ENCODE measurements at regions of chr7 and their contacts with region 1.

Region 1: GRCh38 chr7:116236020-116236630 is 25.8 kb downstream of the TES start:
- DNase-seq: peak; percentile 16
- H3K4me3 Mint-ChIP-seq: no peak overlapping the region
- H3K27ac Mint-ChIP-seq: no peak overlapping the region
- H3K4me1 Mint-ChIP-seq: peaks cover 23% of the 10 kb centered on the region
- H3K27me3 Mint-ChIP-seq: no peaks in the 10 kb centered on the region

Region 2: DNA sequence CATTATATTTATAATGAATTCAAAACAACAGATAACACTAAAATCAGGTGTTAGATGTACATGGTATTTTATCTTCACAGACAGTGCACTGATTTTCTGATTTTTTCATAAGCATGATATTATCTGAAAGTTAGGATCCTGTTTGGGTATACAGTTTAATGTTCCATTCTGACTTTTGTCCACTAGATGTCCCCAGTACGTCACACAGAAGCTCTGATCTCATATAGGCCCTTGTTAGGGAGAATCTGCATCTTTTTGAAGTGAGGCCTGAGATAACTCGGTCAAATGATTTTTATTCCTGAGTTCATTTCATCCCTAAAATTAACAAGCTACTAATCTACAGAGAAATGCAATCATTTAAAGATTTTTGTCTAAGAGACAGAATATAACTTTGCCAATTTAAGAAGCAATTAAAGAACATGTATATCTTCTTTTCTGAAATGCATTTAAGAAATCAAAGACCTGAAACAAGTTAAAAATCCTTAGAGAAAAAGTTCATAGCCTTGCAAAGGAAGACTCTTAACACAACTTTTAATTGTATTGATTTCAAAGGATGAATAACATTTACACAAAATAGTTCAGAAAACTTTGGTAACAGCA is 97.8 kb before region 1 on chr7:
- intact Hi-C with region 1: loop called (anchors 1 kb)
- DNase-seq: peak; percentile 16
- H3K4me3 Mint-ChIP-seq: no peak overlapping the region
- H3K27ac Mint-ChIP-seq: no peak overlapping the region
- H3K4me1 Mint-ChIP-seq: peaks cover 20% of the 10 kb centered on the region
- H3K27me3 Mint-ChIP-seq: peaks cover 9% of the 10 kb centered on the region

Region 3: GRCh38 chr7:116173051-116174028 is 62.8 kb before region 1 on chr7:
- intact Hi-C with region 1: loop called (anchors 1 kb)
- DNase-seq: no peak
- H3K4me3 Mint-ChIP-seq: no peak overlapping the region
- H3K27ac Mint-ChIP-seq: no peak overlapping the region
- H3K4me1 Mint-ChIP-seq: no peaks in the 10 kb centered on the region
- H3K27me3 Mint-ChIP-seq: peaks cover 13% of the 10 kb centered on the region

Region 4: GRCh38 chr7:116180302-116180701 is 55.8 kb before region 1 on chr7:
- intact Hi-C with region 1: loop called (anchors 1 kb)
- DNase-seq: peak; percentile 13
- H3K4me3 Mint-ChIP-seq: no peak overlapping the region
- H3K27ac Mint-ChIP-seq: no peak overlapping the region
- H3K4me1 Mint-ChIP-seq: no peaks in the 10 kb centered on the region
- H3K27me3 Mint-ChIP-seq: peaks cover 2% of the 10 kb centered on the region

Region 5: GRCh38 chr7:116224492-116225098 is 11.5 kb before region 1 on chr7:
- intact Hi-C with region 1: loop called (anchors 1 kb)
- DNase-seq: no peak
- H3K4me3 Mint-ChIP-seq: peak overlapping the region; percentile 53
- H3K27ac Mint-ChIP-seq: no peak overlapping the region
- H3K4me1 Mint-ChIP-seq: peaks cover 53% of the 10 kb centered on the region
- H3K27me3 Mint-ChIP-seq: no peaks in the 10 kb centered on the region

Region 6: GRCh38 chr7:116802746-116803152 is 566.6 kb after region 1 on chr7:
- intact Hi-C with region 1: loop called (anchors 5 kb)
- DNase-seq: peak; percentile 32
- H3K4me3 Mint-ChIP-seq: no peak overlapping the region
- H3K27ac Mint-ChIP-seq: peak overlapping the region; percentile 64
- H3K4me1 Mint-ChIP-seq: peaks cover 16% of the 10 kb centered on the region
- H3K27me3 Mint-ChIP-seq: peaks cover 10% of the 10 kb centered on the region

Region 7: GRCh38 chr7:116977172-116977571 is 741.0 kb after region 1 on chr7:
- intact Hi-C with region 1: no loop called
- DNase-seq: no peak
- H3K4me3 Mint-ChIP-seq: no peak overlapping the region
- H3K27ac Mint-ChIP-seq: no peak overlapping the region
- H3K4me1 Mint-ChIP-seq: no peaks in the 10 kb centered on the region
- H3K27me3 Mint-ChIP-seq: no peaks in the 10 kb centered on the region

Measured in activated T-helper 1 cell treated with anti-CD3 and anti-CD28 coated beads, Interleukin-12 subunit alpha, Interleukin-12 subunit beta, Interleukin-2, Interleukin-4 antibody, amounts not matched to agents 30 ng/mL and 10 ng/mL and 1 ng/mL, durations not matched to agents 14 hours and 24 hours and 36 hours (primary cell).